ENCODE measurements at regions of chr10 and their contacts with region 1.

Region 1: DNA sequence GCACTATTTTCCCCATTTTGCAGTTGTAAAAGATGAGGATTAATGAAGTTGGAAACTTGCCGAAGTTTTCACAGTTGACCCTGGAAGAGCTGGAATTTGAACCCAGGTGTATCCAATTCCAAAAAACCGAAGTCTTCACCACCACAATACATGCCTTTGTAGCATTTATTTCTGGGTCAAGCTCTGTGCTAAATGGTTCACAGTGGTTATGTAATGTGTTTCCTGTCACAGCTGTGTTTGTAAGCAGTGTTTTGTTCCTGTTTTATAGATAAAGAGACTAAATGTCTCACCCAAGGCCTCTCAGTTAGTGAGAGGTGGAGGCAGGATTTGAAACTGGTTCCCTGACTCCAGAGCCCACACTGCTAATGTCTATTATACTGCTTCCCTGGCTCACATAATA is 17.6 kb downstream of the SFTPA2 start:
- DNase-seq: no peak
- H3K4me3 ChIP-seq: no peak overlapping the region
- H3K27ac ChIP-seq: no peak overlapping the region
- H3K4me1 ChIP-seq: no peaks in the 10 kb centered on the region
- H3K27me3 ChIP-seq: no peaks in the 10 kb centered on the region
- CTCF ChIP-seq: no peak
- POLR2A ChIP-seq: no peak

Region 2: GRCh38 chr10:79404231-79404609 is 138.4 kb before region 1 on chr10:
- intact Hi-C with region 1: no loop called
- DNase-seq: no peak
- H3K4me3 ChIP-seq: peak overlapping the region in 1 of 2 donors; percentile 7
- H3K27ac ChIP-seq: no peak overlapping the region
- H3K4me1 ChIP-seq: peaks cover 50% of the 10 kb centered on the region
- H3K27me3 ChIP-seq: no peaks in the 10 kb centered on the region
- CTCF ChIP-seq: no peak
- POLR2A ChIP-seq: no peak

Region 3: GRCh38 chr10:79929409-79929904 is 386.8 kb after region 1 on chr10:
- intact Hi-C with region 1: loop called (anchors 5 kb)
- DNase-seq: peak in 1 of 2 donors; percentile 88
- H3K4me3 ChIP-seq: no peak overlapping the region
- H3K27ac ChIP-seq: no peak overlapping the region
- H3K4me1 ChIP-seq: peaks cover 3% of the 10 kb centered on the region
- H3K27me3 ChIP-seq: no peaks in the 10 kb centered on the region
- CTCF ChIP-seq: peak; percentile 89 to 93 (median 93)
- POLR2A ChIP-seq: no peak

Measured in vagina (tissue), 2 donors.